Naive thymus-derived CD4-positive, alpha-beta T cell (primary cell): ENCODE measurements at regions of chr16 and their contacts with region 1.

Region 1: GRCh38 chr16:66521951-66522771 is 27.8 kb downstream of the TK2 start:
- DNase-seq: peak in 8 of 9 donors; percentile 26 to 92 (median 42)
- ATAC-seq: peak; percentile 65
- H3K4me3 ChIP-seq: peak overlapping the region; percentile 39
- H3K4me3 Mint-ChIP-seq: peak overlapping the region; percentile 71 to 85 (median 80)
- H3K27ac ChIP-seq: no peak overlapping the region
- H3K27ac Mint-ChIP-seq: peak overlapping the region; percentile 79 to 96 (median 91)
- H3K4me1 ChIP-seq: peaks cover 73 to 74% of the 10 kb centered on the region in 2 donors
- H3K4me1 Mint-ChIP-seq: peaks cover 69 to 97% (median 85%) of the 10 kb centered on the region in 7 donors
- H3K27me3 ChIP-seq: no peaks in the 10 kb centered on the region
- H3K27me3 Mint-ChIP-seq: peaks cover 0 to 4% (median 0%) of the 10 kb centered on the region in 5 donors

Region 2: DNA sequence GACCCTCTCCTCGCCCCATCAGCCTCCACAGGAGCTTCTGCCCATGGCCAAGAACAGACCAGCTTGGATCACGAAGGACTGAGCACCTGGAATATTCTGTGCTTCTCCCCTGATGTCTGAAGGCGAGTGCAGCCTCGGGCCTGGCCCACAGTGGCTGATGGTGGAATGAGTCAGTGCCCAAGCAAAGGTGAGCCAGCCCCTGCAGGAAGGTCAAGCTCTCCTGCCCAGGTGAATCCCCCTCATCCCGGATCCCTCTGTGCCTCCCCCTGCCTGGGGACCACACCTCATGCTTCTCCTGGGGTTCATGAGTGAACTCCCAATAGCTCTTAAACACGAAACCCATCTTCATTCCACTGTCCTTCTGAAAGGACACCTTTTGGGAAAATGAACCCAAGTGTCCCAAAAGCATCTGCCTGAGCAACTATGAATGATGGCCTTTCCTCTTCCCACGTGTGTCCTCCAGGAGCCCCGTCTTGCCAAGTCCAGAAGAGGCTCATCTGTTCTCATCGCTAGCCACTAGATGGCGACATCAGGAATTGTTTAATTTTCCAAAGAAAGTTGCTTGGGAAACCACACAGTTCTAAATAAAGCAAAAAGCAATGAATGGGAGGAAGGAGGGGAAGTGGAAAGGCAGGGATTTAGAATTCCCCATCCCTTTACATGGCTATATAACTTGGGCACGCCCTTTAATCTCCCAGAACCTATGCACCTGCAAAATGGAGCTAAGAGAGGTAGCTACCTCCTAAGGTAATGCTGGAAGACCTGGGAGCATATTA is 164.8 kb before region 1 on chr16:
- CTCF ChIA-PET with region 1: no interaction called
- POLR2A ChIA-PET with region 1: no interaction called
- intact Hi-C with region 1: no loop called
- DNase-seq: peak in 3 of 9 donors; percentile 9 to 16 (median 11)
- ATAC-seq: no peak
- H3K4me3 ChIP-seq: no peak overlapping the region
- H3K4me3 Mint-ChIP-seq: no peak overlapping the region
- H3K27ac ChIP-seq: no peak overlapping the region
- H3K27ac Mint-ChIP-seq: no peak overlapping the region
- H3K4me1 ChIP-seq: no peaks in the 10 kb centered on the region
- H3K4me1 Mint-ChIP-seq: peaks cover 0 to 10% (median 4%) of the 10 kb centered on the region in 7 donors
- H3K27me3 ChIP-seq: no peaks in the 10 kb centered on the region
- H3K27me3 Mint-ChIP-seq: peaks cover 35 to 51% (median 44%) of the 10 kb centered on the region in 5 donors

Region 3: DNA sequence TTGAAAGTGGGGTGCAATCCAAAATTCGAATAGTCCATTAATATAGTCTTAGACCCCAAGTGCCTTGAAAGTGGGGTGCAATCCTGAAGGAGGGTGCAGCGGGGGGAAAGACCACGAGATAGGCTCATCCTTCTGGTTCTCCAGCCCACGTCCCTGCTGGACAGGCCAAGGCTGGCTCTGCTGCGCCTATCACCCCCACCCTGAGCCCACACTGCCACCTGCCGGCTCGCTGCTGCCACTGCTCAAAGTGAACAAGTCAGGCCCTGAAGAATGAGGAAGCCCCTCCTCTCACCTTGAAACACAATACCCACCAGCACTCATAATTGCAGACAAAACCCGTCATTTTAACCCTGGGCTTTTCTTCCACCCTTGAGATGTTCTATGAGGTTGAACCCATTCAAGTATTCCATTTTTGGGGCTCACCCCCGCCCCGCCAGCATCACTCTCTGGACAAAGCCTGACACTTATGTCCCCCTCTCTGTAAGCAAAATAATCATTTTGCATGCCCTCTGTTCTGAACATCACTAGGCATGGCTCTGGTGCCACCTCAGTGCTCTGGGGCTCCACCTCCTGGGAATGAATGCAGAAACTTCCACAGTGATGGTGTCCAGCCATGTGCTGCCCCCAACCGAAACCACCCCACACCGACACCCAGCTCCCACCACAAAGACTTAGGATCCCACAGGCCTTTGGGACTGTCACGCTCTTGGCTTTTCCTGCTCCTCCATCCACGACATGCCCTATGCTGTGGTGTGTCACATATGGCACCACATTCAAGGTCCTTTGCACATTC is 38.3 kb before region 1 on chr16:
- CTCF ChIA-PET with region 1: interaction called, 5 read pairs
- POLR2A ChIA-PET with region 1: no interaction called
- intact Hi-C with region 1: loop called in 1 of 2 experiments (anchors 2 kb)
- DNase-seq: peak; percentile 55 to 79 (median 64)
- ATAC-seq: peak; percentile 84
- H3K4me3 ChIP-seq: no peak overlapping the region
- H3K4me3 Mint-ChIP-seq: peak overlapping the region in 1 of 10 donors; percentile 9
- H3K27ac ChIP-seq: no peak overlapping the region
- H3K27ac Mint-ChIP-seq: peak overlapping the region in 4 of 9 donors; percentile 44 to 88 (median 68)
- H3K4me1 ChIP-seq: peaks cover 7 to 8% of the 10 kb centered on the region in 2 donors
- H3K4me1 Mint-ChIP-seq: peaks cover 6 to 40% (median 17%) of the 10 kb centered on the region in 7 donors
- H3K27me3 ChIP-seq: no peaks in the 10 kb centered on the region
- H3K27me3 Mint-ChIP-seq: no peaks in the 10 kb centered on the region

Region 4: DNA sequence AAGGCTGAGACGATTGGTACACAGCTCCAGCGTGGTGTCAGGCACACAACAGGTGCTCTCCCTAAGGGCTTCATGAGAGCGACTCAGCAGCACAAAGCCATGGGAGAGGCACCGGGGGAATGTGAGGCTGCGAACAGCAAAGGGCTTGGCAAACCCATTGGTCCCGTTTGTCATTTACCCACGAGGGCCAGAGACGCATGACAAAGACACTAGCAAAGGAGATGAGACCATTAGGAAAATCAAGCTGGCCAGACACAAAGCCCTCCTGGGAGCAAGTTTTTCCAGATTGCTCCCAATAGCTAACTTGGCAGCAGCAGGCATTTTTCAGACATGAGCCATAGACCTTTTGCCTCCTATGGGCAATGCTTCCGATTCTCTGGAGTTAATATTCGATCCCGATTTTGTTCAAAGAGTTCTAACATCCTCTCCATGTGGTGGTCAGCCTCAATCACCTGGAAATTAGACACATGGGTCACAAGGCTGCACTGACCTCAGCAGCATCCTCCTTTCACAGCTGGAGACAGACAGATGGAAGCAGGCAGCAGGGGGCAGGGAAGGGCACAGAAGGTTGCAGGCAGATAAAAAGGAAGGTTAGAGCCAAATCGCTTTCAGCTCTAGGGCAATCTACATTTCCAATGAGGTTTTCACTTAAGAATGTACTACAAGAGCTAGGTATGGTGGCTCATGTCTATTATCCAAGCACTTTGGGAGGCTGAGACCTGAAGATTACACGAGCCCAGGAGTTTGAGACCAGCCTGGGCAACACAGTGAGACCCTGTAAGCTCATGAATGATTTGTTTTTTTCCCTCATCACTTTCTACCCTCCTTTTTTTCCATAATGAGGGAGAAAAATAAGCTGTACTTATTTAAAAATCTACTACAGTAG is 10.3 kb before region 1 on chr16:
- CTCF ChIA-PET with region 1: interaction called, 7 read pairs
- POLR2A ChIA-PET with region 1: interaction called, 9 read pairs
- intact Hi-C with region 1: loop called (anchors 1 to 2 kb)
- DNase-seq: no peak
- ATAC-seq: no peak
- H3K4me3 ChIP-seq: no peak overlapping the region
- H3K4me3 Mint-ChIP-seq: no peak overlapping the region
- H3K27ac ChIP-seq: no peak overlapping the region
- H3K27ac Mint-ChIP-seq: peak overlapping the region in 1 of 9 donors; percentile 24
- H3K4me1 ChIP-seq: peaks cover 18 to 21% of the 10 kb centered on the region in 2 donors
- H3K4me1 Mint-ChIP-seq: peaks cover 26 to 37% (median 30%) of the 10 kb centered on the region in 7 donors
- H3K27me3 ChIP-seq: no peaks in the 10 kb centered on the region
- H3K27me3 Mint-ChIP-seq: no peaks in the 10 kb centered on the region

Region 5: GRCh38 chr16:66539623-66540469 is 17.7 kb after region 1 on chr16:
- CTCF ChIA-PET with region 1: interaction called, 3 read pairs
- POLR2A ChIA-PET with region 1: interaction called, 164 read pairs
- intact Hi-C with region 1: loop called in 1 of 2 experiments (anchors 2 kb)
- DNase-seq: no peak
- ATAC-seq: no peak
- H3K4me3 ChIP-seq: no peak overlapping the region
- H3K4me3 Mint-ChIP-seq: peak overlapping the region in 3 of 10 donors; percentile 14 to 39 (median 27)
- H3K27ac ChIP-seq: no peak overlapping the region
- H3K27ac Mint-ChIP-seq: peak overlapping the region in 5 of 9 donors; percentile 47 to 71 (median 63)
- H3K4me1 ChIP-seq: peaks cover 0 to 3% of the 10 kb centered on the region in 2 donors
- H3K4me1 Mint-ChIP-seq: peaks cover 12 to 43% (median 20%) of the 10 kb centered on the region in 7 donors
- H3K27me3 ChIP-seq: no peaks in the 10 kb centered on the region
- H3K27me3 Mint-ChIP-seq: no peaks in the 10 kb centered on the region

Region 6: GRCh38 chr16:66872943-66873684 is 351.0 kb after region 1 on chr16:
- CTCF ChIA-PET with region 1: interaction called, 4 read pairs
- POLR2A ChIA-PET with region 1: no interaction called
- intact Hi-C with region 1: loop called in 1 of 2 experiments (anchors 2 kb)
- DNase-seq: peak; percentile 62 to 93 (median 77)
- ATAC-seq: peak; percentile 95
- H3K4me3 ChIP-seq: peak overlapping the region; percentile 48
- H3K4me3 Mint-ChIP-seq: peak overlapping the region; percentile 77 to 94 (median 82)
- H3K27ac ChIP-seq: peak overlapping the region; percentile 18
- H3K27ac Mint-ChIP-seq: peak overlapping the region; percentile 7 to 93 (median 60)
- H3K4me1 ChIP-seq: peaks cover 5 to 6% of the 10 kb centered on the region in 2 donors
- H3K4me1 Mint-ChIP-seq: peaks cover 7 to 49% (median 14%) of the 10 kb centered on the region in 7 donors
- H3K27me3 ChIP-seq: no peaks in the 10 kb centered on the region
- H3K27me3 Mint-ChIP-seq: no peaks in the 10 kb centered on the region